Naive thymus-derived CD4-positive, alpha-beta T cell (primary cell): ENCODE measurements at regions of chr21 and their contacts with region 1.

Region 1: DNA sequence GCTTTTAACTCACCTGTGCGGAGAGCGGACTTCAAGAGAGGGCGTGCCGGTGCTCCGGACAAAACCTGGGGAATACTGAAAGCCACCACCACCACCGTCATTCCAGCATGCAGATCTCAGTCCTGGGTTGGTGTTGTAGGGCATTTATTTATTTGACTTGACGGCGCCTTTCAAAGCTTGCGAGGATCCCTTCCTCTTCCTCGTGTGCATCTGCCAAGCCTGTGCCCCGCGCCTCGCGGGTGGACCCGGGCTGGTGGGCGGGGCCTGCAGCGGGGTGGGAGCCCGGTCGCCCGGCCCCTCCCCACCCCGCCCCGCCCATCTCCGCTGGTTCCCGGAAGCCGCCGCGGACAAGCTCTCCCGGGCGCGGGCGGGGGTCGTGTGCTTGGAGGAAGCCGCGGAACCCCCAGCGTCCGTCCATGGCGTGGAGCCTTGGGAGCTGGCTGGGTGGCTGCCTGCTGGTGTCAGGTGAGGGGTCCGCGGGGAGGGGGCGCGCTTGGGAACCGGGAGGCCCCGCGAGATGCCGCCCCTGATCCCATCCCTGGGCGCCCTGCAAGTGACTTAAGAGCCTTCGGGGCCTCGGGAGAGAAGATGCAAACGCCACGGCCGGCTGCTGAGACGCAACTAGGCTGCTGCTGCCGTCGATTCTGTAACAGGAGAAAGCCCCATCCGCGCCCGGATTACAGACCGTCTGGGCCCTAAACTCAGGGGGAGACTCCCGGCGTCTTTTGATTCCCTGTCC is at the start of gene IL10RB:
- DNase-seq: peak; percentile 53 to 80 (median 62)
- ATAC-seq: peak; percentile 88
- H3K4me3 ChIP-seq: peak within 1 kb of the TSS; percentile 87
- H3K4me3 Mint-ChIP-seq: peak within 1 kb of the TSS; percentile 86 to 99 (median 96)
- H3K27ac ChIP-seq: peak within 1 kb of the TSS; percentile 83
- H3K27ac Mint-ChIP-seq: peak within 1 kb of the TSS; percentile 91 to 97 (median 94)
- H3K4me1 ChIP-seq: peaks cover 23 to 38% of the 10 kb centered on the region in 2 donors
- H3K4me1 Mint-ChIP-seq: peaks cover 45 to 78% (median 57%) of the 10 kb centered on the region in 7 donors
- H3K27me3 ChIP-seq: no peaks in the 10 kb centered on the region
- H3K27me3 Mint-ChIP-seq: no peaks in the 10 kb centered on the region
- total RNA-seq, gene IL10RB: 17.6 to 35.0 (median 27.2) TPM

Region 2: DNA sequence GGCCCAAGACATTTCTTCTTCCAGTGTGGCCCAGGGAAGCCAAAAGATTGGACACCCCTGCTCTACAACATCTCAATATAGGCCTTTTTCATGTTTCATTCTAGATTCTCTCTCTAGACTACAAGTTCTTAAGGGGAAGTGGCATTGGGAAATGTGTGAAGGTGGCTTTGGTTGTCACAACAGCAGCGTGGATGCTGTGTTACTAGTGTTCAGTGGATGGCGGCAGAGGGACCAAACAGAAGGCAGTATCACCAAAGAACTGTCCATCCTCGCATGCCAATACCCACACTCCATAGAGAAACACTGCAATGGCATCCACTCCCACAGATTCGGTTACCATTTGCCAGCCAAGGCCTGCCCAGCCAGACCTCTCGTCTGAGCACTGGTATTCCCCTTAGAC is 60.7 kb before region 1 on chr21:
- CTCF ChIA-PET with region 1: no interaction called
- POLR2A ChIA-PET with region 1: interaction called, 3 read pairs
- intact Hi-C with region 1: loop called in 1 of 2 experiments (anchors 1 kb)
- DNase-seq: no peak
- ATAC-seq: peak; percentile 65
- H3K4me3 ChIP-seq: peak overlapping the region; percentile 5
- H3K4me3 Mint-ChIP-seq: peak overlapping the region; percentile 5 to 83 (median 60)
- H3K27ac ChIP-seq: peak overlapping the region; percentile 12
- H3K27ac Mint-ChIP-seq: peak overlapping the region; percentile 21 to 90 (median 82)
- H3K4me1 ChIP-seq: peaks cover 21 to 33% of the 10 kb centered on the region in 2 donors
- H3K4me1 Mint-ChIP-seq: peaks cover 42 to 73% (median 59%) of the 10 kb centered on the region in 7 donors
- H3K27me3 ChIP-seq: no peaks in the 10 kb centered on the region
- H3K27me3 Mint-ChIP-seq: no peaks in the 10 kb centered on the region

Region 3: DNA sequence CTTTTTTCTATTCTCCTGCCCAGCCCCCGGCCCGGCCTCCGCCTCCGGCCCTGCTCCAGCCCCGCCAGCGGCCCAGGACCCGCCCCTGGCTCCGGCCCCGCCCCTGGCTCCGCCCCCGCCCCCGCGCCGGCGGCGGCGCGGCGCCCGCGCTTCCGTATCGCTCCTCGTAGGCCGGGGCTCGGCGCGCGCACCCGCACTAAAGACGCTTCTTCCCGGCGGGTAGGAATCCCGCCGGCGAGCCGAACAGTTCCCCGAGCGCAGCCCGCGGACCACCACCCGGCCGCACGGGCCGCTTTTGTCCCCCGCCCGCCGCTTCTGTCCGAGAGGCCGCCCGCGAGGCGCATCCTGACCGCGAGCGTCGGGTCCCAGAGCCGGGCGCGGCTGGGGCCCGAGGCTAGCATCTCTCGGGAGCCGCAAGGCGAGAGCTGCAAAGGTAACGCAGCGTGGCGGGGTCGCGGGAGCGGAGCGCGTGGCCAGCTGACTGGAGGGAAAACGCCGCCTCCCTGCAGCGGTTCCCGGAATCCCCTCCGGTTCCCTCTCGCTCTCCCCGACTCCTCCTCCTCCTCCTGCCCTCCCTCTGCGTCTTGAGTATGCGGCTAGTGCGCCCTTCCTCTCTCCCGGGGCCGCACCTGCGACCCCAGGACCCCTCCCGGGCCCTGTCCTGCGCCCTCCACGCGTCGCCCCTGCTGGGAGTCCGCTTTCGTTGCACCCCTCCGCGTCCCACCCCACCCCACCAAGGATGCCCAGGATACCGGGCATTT is 36.3 kb before region 1 on chr21 and contains the start of gene IFNAR2:
- CTCF ChIA-PET with region 1: interaction called, 7 read pairs
- POLR2A ChIA-PET with region 1: interaction called, 20 read pairs
- intact Hi-C with region 1: loop called (anchors 1 kb)
- DNase-seq: peak; percentile 55 to 82 (median 68)
- ATAC-seq: peak; percentile 93
- H3K4me3 ChIP-seq: peak within 1 kb of the TSS; percentile 83
- H3K4me3 Mint-ChIP-seq: peak within 1 kb of the TSS; percentile 88 to 97 (median 92)
- H3K27ac ChIP-seq: peak within 1 kb of the TSS; percentile 92
- H3K27ac Mint-ChIP-seq: peak within 1 kb of the TSS; percentile 83 to 98 (median 90)
- H3K4me1 ChIP-seq: peaks cover 22 to 40% of the 10 kb centered on the region in 2 donors
- H3K4me1 Mint-ChIP-seq: peaks cover 35 to 59% (median 51%) of the 10 kb centered on the region in 7 donors
- H3K27me3 ChIP-seq: no peaks in the 10 kb centered on the region
- H3K27me3 Mint-ChIP-seq: no peaks in the 10 kb centered on the region
- total RNA-seq, gene IFNAR2: 44.9 to 85.8 (median 60.8) TPM

Region 4: GRCh38 chr21:33238565-33239255 is 27.5 kb before region 1 on chr21:
- CTCF ChIA-PET with region 1: interaction called, 3 read pairs
- POLR2A ChIA-PET with region 1: interaction called, 20 read pairs
- intact Hi-C with region 1: no loop called
- DNase-seq: peak in 2 of 9 donors; percentile 13 to 39
- ATAC-seq: peak; percentile 73
- H3K4me3 ChIP-seq: peak overlapping the region; percentile 26
- H3K4me3 Mint-ChIP-seq: peak overlapping the region in 9 of 10 donors; percentile 46 to 84 (median 70)
- H3K27ac ChIP-seq: peak overlapping the region; percentile 60
- H3K27ac Mint-ChIP-seq: peak overlapping the region; percentile 43 to 96 (median 90)
- H3K4me1 ChIP-seq: peaks cover 65 to 81% of the 10 kb centered on the region in 2 donors
- H3K4me1 Mint-ChIP-seq: peaks cover 63 to 92% (median 85%) of the 10 kb centered on the region in 7 donors
- H3K27me3 ChIP-seq: no peaks in the 10 kb centered on the region
- H3K27me3 Mint-ChIP-seq: no peaks in the 10 kb centered on the region

Region 5: GRCh38 chr21:33293811-33294216 is 27.6 kb after region 1 on chr21:
- CTCF ChIA-PET with region 1: no interaction called
- POLR2A ChIA-PET with region 1: interaction called, 8 read pairs
- intact Hi-C with region 1: loop called in 1 of 2 experiments (anchors 2 kb)
- DNase-seq: peak in 7 of 9 donors; percentile 26 to 74 (median 63)
- ATAC-seq: peak; percentile 75
- H3K4me3 ChIP-seq: no peak overlapping the region
- H3K4me3 Mint-ChIP-seq: peak overlapping the region in 9 of 10 donors; percentile 48 to 84 (median 73)
- H3K27ac ChIP-seq: peak overlapping the region; percentile 53
- H3K27ac Mint-ChIP-seq: peak overlapping the region; percentile 60 to 96 (median 87)
- H3K4me1 ChIP-seq: peaks cover under 1 to 28% of the 10 kb centered on the region in 2 donors
- H3K4me1 Mint-ChIP-seq: peaks cover 22 to 52% (median 44%) of the 10 kb centered on the region in 7 donors
- H3K27me3 ChIP-seq: no peaks in the 10 kb centered on the region
- H3K27me3 Mint-ChIP-seq: no peaks in the 10 kb centered on the region

Region 6: DNA sequence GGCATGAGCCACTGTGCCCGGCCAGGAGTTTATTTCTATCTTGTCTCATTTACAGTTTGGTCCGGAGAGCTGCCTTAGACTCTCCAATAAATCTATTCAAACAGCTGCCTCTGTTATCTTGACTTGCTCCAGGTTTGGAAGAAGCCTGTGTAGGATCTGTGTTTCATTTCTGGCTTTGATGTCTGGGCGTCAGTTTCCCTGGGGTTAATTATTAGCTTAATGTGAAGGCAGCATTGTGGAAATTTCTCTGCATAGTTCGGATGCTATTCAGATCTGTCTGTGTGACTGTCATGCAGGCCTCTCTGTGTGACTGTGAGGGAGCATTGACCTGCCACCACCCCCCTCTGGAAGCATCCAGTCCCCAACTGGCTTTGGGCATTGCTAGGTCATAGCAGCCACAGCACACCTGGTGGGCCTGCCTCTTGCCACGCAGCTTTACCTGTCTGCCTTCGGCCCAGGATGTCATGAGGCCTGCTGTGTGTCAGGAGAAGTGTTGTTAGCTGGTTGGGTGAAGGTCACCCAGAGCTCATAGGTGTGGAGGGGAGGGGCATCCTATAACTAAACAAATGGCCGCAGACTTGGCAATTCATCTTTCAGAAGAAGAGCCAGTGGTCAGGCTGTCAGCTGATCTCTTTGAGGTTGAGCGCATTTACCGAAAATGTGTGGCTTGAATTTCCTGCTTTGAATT is 146.8 kb after region 1 on chr21:
- CTCF ChIA-PET with region 1: no interaction called
- POLR2A ChIA-PET with region 1: no interaction called
- intact Hi-C with region 1: no loop called
- DNase-seq: no peak
- ATAC-seq: peak; percentile 36
- H3K4me3 ChIP-seq: no peak overlapping the region
- H3K4me3 Mint-ChIP-seq: peak overlapping the region in 9 of 10 donors; percentile 34 to 70 (median 62)
- H3K27ac ChIP-seq: peak overlapping the region; percentile 49
- H3K27ac Mint-ChIP-seq: peak overlapping the region in 8 of 9 donors; percentile 64 to 86 (median 81)
- H3K4me1 ChIP-seq: peaks cover 0 to 14% of the 10 kb centered on the region in 2 donors
- H3K4me1 Mint-ChIP-seq: peaks cover 23 to 69% (median 56%) of the 10 kb centered on the region in 7 donors
- H3K27me3 ChIP-seq: no peaks in the 10 kb centered on the region
- H3K27me3 Mint-ChIP-seq: peaks cover 0 to 14% (median 0%) of the 10 kb centered on the region in 5 donors

Region 7: DNA sequence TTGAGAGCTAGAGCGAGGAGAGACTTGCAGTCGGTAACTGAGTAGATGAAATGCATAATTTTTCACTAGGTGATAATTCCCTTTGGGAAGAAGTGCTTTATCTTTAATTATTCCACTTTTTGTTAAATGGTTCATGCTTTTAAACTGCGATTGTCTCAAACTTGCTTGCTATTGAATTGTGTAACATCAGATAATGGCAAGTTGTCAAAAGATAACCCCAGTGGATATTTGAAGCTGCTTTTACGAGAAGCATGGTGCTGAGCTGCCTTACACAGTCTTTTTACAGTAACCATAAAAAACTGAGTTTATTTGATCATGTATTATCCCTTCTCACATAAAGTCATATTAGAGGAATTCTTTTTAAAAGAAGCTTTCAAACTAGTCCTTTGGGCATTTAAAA is 183.4 kb after region 1 on chr21:
- CTCF ChIA-PET with region 1: interaction called, 3 read pairs
- POLR2A ChIA-PET with region 1: no interaction called
- intact Hi-C with region 1: loop called in 1 of 2 experiments (anchors 5 kb)
- DNase-seq: no peak
- ATAC-seq: no peak
- H3K4me3 ChIP-seq: no peak overlapping the region
- H3K4me3 Mint-ChIP-seq: no peak overlapping the region
- H3K27ac ChIP-seq: no peak overlapping the region
- H3K27ac Mint-ChIP-seq: peak overlapping the region in 4 of 9 donors; percentile 51 to 81 (median 60)
- H3K4me1 ChIP-seq: no peaks in the 10 kb centered on the region
- H3K4me1 Mint-ChIP-seq: peaks cover 0 to 5% (median 4%) of the 10 kb centered on the region in 7 donors
- H3K27me3 ChIP-seq: no peaks in the 10 kb centered on the region
- H3K27me3 Mint-ChIP-seq: no peaks in the 10 kb centered on the region